ENCODE measurements at regions of chr3 and their contacts with region 1.

Region 1: DNA sequence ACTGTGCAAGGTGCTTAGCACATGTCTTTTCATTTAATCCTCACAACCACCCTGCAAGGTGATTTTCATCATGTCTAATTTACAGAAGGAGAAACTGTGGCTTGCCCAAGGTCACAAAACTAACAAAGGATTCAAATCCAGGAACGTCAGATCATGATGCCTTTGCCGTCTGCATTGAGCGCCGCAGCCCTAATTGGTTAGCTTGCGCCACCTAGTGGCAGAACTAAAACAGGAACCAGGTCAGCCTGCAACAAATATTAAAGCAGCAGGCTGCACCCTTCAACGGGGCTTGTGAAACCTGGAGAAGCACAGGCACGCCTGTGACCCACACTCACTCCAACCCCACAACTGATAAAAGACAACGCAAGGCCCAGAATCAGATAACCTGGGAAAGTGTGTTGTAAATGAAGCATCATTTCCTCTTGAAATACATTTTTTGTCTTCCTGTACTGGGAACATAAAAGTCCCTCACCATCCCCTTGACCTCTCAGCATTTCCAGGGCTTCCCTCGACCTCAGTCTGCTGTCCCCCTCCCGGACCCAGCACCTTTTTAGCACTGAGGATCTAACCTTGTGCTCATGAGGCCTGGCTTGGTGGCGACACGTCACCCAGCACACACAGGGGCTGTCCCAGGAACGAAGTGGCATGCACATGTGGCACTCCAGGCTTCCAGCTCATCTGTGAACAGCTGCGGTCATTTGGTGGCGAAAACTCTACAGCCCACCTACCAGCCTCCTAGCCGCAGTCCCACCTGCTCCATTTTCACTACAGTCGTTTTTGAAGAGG is 17.3 kb downstream of the DPH3 start:
- DNase-seq: peak; percentile 80
- ATAC-seq: peak; percentile 83
- H3K4me3 Mint-ChIP-seq: no peak overlapping the region
- H3K27ac Mint-ChIP-seq: no peak overlapping the region
- H3K4me1 Mint-ChIP-seq: peaks cover 14% of the 10 kb centered on the region
- H3K27me3 Mint-ChIP-seq: peaks cover 3% of the 10 kb centered on the region; the same call in 1 of the 2 replicates
- CTCF ChIP-seq: peak; percentile 89

Region 2: DNA sequence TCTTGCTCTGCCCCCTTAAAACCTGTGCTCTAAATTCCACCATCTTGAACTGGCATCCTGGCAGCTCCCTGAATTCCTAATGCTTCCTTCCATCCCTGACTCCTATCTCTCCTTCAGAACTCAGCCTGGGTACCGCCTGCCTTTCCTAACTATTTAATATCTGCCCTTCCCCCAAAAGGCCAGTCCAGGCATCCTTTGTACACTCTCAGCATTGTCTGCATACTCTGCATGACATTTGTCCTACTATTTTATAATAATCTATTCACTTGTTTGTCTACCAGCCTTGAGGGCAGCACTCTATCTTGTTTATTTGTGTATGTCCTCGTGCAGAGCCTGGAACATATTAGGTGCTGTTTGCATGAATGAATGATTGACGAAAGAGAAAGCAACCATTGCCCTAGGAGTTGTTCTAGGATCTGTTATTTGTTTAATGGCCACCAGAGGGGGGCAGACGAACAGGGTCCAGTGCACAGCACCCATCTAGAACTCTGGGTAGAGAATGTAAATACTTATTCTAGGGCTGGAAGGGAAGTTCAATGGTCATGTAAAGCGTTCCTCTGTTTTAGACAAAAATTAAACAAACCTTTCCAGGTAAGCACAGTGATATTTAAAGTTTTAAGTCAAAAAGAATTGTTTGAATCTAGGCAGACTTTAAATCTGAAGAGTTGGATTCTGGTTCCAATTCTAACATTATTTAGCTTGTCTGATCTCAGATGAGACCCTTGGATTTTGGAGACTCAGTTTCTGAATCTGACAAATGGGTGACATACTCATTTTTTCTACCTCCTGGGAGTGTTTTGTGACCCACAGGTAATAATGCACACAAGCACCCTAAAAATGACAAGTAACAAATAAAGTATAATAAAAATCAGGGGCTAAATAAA is 198.8 kb before region 1 on chr3:
- CTCF ChIA-PET with region 1: interaction called, 11 read pairs
- POLR2A ChIA-PET with region 1: no interaction called
- DNase-seq: peak; percentile 18
- ATAC-seq: peak; percentile 97
- H3K4me3 Mint-ChIP-seq: no peak overlapping the region
- H3K27ac Mint-ChIP-seq: no peak overlapping the region
- H3K4me1 Mint-ChIP-seq: no peaks in the 10 kb centered on the region
- H3K27me3 Mint-ChIP-seq: no peaks in the 10 kb centered on the region
- CTCF ChIP-seq: peak; percentile 67

Region 3: DNA sequence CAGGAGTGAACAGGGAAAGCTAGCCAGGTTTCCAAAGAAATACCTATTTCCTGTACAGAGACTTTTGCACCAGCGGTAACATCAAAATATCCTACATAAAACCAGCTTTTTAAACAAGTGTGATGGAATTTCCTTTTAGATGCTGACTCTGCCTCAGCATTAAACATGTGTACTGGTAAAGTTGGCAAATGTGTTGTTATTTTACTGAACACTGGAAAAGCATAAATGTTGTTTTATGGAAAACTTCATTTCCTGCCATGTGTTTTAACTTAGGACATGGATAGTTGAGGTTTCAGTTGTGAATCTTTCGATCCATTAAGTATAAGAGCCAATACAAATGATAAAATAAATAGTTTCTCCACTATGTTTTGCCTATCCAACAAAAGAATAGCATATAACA is 33.2 kb after region 1 on chr3:
- CTCF ChIA-PET with region 1: no interaction called
- POLR2A ChIA-PET with region 1: no interaction called
- DNase-seq: no peak
- ATAC-seq: no peak
- H3K4me3 Mint-ChIP-seq: no peak overlapping the region
- H3K27ac Mint-ChIP-seq: no peak overlapping the region
- H3K4me1 Mint-ChIP-seq: no peaks in the 10 kb centered on the region
- H3K27me3 Mint-ChIP-seq: no peaks in the 10 kb centered on the region
- CTCF ChIP-seq: no peak

Region 4: DNA sequence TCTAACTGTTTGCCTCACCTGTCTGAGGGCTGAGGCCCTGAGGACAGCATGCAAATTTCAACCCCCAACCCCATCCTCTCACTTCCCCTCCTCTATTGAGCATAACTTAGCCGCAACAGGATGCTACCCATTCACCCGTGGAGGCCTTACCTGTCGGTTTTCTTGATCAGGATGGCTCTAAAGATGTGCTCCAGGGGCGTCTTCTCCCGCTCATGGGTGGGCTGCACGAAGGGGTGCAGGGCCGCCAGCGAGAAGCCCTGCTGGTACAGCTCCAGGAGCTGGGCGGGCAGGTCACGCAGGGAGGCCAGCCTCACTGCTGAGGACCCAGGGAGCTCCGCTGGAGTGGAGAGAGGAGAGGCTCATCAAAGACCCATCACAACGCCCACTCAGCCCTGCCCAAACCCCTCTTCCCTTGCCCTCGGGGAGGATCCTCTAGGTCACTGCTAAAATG is 186.3 kb after region 1 on chr3:
- CTCF ChIA-PET with region 1: no interaction called
- POLR2A ChIA-PET with region 1: no interaction called
- DNase-seq: no peak
- ATAC-seq: peak; percentile 85
- H3K4me3 Mint-ChIP-seq: no peak overlapping the region
- H3K27ac Mint-ChIP-seq: no peak overlapping the region; the same call in 1 of the 2 replicates
- H3K4me1 Mint-ChIP-seq: peaks cover 13% of the 10 kb centered on the region
- H3K27me3 Mint-ChIP-seq: no peaks in the 10 kb centered on the region
- CTCF ChIP-seq: no peak